ENCODE measurements at regions of chr2 and their contacts with region 1.

Region 1: GRCh38 chr2:98280376-98281102 is 65.7 kb upstream of the CNGA3 start:
- DNase-seq: no peak
- ATAC-seq: peak; percentile 73

Region 2: GRCh38 chr2:98050070-98050469 is 230.5 kb before region 1 on chr2:
- intact Hi-C with region 1: loop called (anchors 5 kb)
- DNase-seq: no peak
- ATAC-seq: no peak

Region 3: DNA sequence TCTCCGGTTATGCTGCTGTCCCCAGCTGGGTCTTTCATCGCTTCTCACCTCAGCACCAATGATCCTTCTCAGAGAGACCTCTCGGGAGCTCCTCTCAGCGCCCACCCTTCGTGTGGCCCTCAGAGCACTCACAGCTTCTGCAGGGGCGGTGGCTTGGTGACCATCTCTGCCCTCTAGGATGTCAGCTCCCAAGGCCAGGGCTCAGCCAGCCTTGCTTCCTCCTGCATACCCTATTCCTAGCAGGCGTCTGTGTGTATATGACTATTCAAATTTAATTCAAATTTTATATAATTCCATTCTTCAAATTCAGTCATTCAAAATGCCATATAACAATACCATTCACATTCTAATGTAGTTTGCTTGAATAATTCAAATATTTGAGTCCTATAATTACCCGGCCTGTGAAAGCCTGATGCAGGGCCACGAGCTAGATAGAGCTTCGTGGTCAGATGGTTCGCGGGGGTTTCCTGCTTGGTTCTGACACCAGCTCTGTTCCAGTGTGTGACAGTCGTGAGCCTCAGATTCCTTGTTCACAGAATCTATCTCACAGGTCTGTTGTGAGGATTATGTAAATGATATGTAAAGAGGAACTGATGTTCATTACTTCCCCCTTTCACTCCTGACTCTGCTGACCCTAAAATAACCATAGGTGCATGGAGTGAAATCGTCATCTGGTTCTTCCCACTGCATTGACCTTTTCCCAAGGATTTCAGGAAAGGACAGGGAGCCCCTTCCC is 28.3 kb before region 1 on chr2:
- intact Hi-C with region 1: no loop called
- DNase-seq: no peak
- ATAC-seq: no peak

Region 4: DNA sequence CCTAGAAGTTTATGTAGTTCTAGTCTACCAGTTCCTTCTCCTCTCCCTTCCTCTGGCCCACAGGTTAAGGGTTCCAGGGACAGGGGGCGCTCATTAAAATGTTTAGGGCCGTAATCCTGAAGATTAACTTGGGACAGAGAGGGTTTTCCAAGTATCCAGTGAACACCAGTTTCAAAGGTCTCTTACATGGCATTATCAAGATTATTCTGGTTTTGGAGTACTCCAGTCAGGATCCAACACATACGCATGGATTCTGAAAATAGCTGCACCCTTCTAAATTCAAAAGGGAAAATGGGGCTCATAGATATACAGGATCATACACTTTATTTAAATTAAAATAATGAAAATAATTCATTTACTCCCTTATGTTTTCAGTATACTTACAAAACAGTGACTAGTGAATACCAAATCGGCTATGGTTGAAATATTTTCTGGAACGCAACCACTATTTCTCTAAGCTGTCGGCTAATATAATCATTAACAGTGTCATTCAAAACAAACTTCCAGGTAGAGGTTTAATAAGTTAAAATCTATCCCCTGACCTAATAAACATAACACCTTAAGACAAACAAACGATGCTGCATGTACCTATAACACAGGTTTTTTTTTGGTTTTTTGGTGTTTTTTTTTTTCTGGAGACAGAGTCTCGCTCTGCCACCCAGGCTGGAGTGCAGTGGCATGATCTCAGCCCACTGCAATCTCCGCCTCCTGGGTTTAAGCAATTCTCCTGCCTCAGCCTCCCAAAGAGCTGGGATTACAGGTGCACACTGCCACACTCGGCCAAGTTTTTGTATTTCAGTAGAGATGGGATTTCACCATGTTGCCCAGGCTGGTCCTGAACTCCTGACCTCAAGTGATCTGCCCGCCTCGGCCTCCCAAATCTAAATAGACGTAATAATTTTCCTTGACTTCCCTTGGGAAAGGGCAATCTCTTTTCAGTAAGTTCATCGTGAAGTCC is 405.7 kb after region 1 on chr2:
- intact Hi-C with region 1: no loop called
- DNase-seq: no peak
- ATAC-seq: no peak